ENCODE measurements at regions of chr1 and their contacts with region 1.

Region 1: DNA sequence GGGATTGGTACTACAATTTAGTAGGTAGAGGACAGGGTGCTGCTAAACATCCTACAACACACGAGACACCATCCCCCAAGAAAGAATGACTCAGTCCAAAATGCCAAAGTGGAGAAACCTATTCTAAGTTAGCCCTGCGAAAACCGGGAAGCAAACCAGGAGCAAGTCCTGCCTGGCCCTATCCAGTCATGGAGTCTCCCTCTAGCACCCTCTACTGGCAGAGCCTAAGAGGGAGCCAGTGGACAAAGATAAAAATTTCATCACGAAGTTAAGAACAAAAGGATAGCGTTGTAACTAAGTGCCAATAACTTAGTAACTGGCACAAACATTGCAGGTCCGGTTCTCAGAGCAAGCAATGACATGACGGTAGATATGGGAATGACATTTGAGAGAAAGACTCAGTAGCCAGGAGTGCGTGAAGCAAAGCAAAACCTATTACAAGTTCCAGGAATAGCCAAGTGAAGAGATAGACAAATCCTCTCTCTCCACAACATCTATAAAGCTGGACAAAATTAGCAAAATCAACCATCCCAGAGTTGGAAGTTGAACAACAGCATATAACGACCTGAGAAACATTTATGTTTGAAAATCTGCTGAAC is 383.5 kb downstream of the OMA1 start:
- DNase-seq: peak; percentile 42 to 61 (median 48)
- H3K4me3 ChIP-seq: no peak overlapping the region
- H3K27ac ChIP-seq: no peak overlapping the region
- H3K4me1 ChIP-seq: no peaks in the 10 kb centered on the region
- H3K27me3 ChIP-seq: no peaks in the 10 kb centered on the region

Region 2: GRCh38 chr1:58065520-58065919 is 97.5 kb before region 1 on chr1:
- CTCF ChIA-PET with region 1: interaction called, 13 read pairs
- POLR2A ChIA-PET with region 1: no interaction called
- DNase-seq: peak; percentile 18 to 35 (median 19)
- H3K4me3 ChIP-seq: no peak overlapping the region
- H3K27ac ChIP-seq: no peak overlapping the region
- H3K4me1 ChIP-seq: no peaks in the 10 kb centered on the region
- H3K27me3 ChIP-seq: peaks cover 0 to 4% (median 0%) of the 10 kb centered on the region in 5 experiments